ENCODE measurements at regions of chr4 and their contacts with region 1.

Region 1: GRCh38 chr4:114626207-114626606 is 27.6 kb downstream of the UGT8 start:
- DNase-seq: no peak
- H3K4me3 ChIP-seq: no peak overlapping the region
- H3K27ac ChIP-seq: no peak overlapping the region
- H3K4me1 ChIP-seq: peaks cover 0 to 13% (median 2%) of the 10 kb centered on the region in 4 donors
- H3K27me3 ChIP-seq: no peaks in the 10 kb centered on the region
- CTCF ChIP-seq: no peak
- EP300 ChIP-seq: no peak
- POLR2A ChIP-seq: no peak

Region 2: DNA sequence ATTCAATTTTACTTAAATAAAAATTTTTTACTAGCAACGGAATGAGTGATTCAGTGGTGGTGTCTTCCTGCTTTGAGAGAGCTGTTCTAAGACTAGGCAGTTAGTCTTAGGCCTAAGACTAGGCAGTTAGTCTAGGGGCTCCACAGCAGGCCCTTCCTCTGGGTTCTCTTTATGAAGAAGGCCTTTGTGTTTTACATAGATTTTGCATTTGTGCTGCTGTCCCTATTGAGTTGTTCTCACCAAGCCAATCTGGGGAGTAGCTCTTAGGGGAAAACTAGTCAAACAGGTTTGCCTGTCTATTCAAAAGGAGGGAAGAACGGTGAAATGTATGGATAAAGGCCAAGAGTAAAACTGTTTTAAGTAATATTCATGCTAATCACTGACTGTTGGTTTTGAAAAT is 20.0 kb before region 1 on chr4:
- in situ Hi-C with region 1: no loop called
- intact Hi-C with region 1: loop called (anchors 1 kb)
- DNase-seq: no peak
- H3K4me3 ChIP-seq: no peak overlapping the region
- H3K27ac ChIP-seq: peak overlapping the region; percentile 54 to 71 (median 64)
- H3K4me1 ChIP-seq: peaks cover 2 to 62% (median 25%) of the 10 kb centered on the region in 4 donors
- H3K27me3 ChIP-seq: no peaks in the 10 kb centered on the region
- CTCF ChIP-seq: no peak
- EP300 ChIP-seq: no peak
- POLR2A ChIP-seq: no peak

Measured in transverse colon (tissue), 4 donors.